ENCODE measurements at regions of chr15 and their contacts with region 1.

Region 1: GRCh38 chr15:67945951-67946700 is 106.3 kb upstream of the RNU6-1 start:
- DNase-seq: peak; percentile 92 to 97
- H3K4me3 ChIP-seq: 0 out of 2 replicates have a peak overlapping the region, but pooled peaks have one; percentile 0
- H3K4me3 Mint-ChIP-seq: peak overlapping the region; percentile 83
- H3K27ac Mint-ChIP-seq: peak overlapping the region; percentile 99
- H3K4me1 ChIP-seq: peaks cover 58% of the 10 kb centered on the region
- H3K4me1 Mint-ChIP-seq: peaks cover 37% of the 10 kb centered on the region
- H3K27me3 ChIP-seq: no peaks in the 10 kb centered on the region
- H3K27me3 Mint-ChIP-seq: no peaks in the 10 kb centered on the region
- CTCF ChIP-seq: no peak

Region 2: DNA sequence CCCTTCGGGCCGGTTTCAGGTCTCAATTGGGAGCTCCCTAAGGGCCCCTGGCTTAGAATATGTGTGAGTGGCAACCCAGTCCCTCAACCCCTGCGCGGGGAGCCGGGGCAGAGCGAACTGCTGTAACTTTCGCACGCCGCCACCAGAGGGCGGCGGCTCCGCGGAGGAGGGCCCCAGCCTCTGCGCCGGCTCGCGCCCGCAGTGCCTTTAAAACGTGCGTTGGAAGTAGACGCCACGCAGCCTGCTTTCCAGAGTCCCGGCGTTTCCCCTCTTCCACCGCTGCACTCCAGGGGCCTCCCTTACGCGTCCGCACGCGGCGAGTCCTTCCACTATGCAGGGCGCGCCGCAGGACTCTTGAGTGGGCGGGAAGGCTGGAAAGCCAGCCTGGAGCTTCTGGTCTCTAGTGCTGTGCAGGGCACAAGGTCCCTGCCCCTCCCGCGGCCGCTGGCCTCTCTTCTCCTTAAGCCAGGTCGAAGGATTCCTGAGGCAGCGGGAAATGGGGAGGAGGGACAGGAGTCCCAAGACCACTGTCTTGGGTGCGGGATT is 82.6 kb before region 1 on chr15:
- CTCF ChIA-PET with region 1: interaction called, 6 read pairs
- POLR2A ChIA-PET with region 1: no interaction called
- intact Hi-C with region 1: loop called (anchors 5 kb)
- DNase-seq: peak; percentile 82 to 86
- H3K4me3 ChIP-seq: peak overlapping the region; percentile 45
- H3K4me3 Mint-ChIP-seq: peak overlapping the region; percentile 70
- H3K27ac Mint-ChIP-seq: peak overlapping the region; percentile 80
- H3K4me1 ChIP-seq: peaks cover 9% of the 10 kb centered on the region; the same call in 1 of the 2 replicates
- H3K4me1 Mint-ChIP-seq: peaks cover 15% of the 10 kb centered on the region
- H3K27me3 ChIP-seq: no peaks in the 10 kb centered on the region
- H3K27me3 Mint-ChIP-seq: no peaks in the 10 kb centered on the region
- CTCF ChIP-seq: peak; percentile 89 to 91

Region 3: GRCh38 chr15:67914537-67915460 is 31.3 kb before region 1 on chr15:
- CTCF ChIA-PET with region 1: interaction called, 6 read pairs
- POLR2A ChIA-PET with region 1: interaction called, 24 read pairs
- intact Hi-C with region 1: loop called (anchors 1 kb)
- DNase-seq: peak; percentile 74
- H3K4me3 ChIP-seq: peak overlapping the region; percentile 14
- H3K4me3 Mint-ChIP-seq: peak overlapping the region; percentile 64
- H3K27ac Mint-ChIP-seq: peak overlapping the region; percentile 72
- H3K4me1 ChIP-seq: peaks cover 55% of the 10 kb centered on the region
- H3K4me1 Mint-ChIP-seq: peaks cover 37% of the 10 kb centered on the region
- H3K27me3 ChIP-seq: no peaks in the 10 kb centered on the region
- H3K27me3 Mint-ChIP-seq: no peaks in the 10 kb centered on the region
- CTCF ChIP-seq: no peak

Region 4: GRCh38 chr15:68017191-68017590 is 71.1 kb after region 1 on chr15:
- CTCF ChIA-PET with region 1: interaction called, 3 read pairs
- POLR2A ChIA-PET with region 1: no interaction called
- intact Hi-C with region 1: loop called (anchors 1 kb)
- DNase-seq: peak; percentile 67 to 85
- H3K4me3 ChIP-seq: no peak overlapping the region
- H3K4me3 Mint-ChIP-seq: peak overlapping the region; percentile 55
- H3K27ac Mint-ChIP-seq: peak overlapping the region; percentile 99
- H3K4me1 ChIP-seq: peaks cover 38% of the 10 kb centered on the region
- H3K4me1 Mint-ChIP-seq: peaks cover 53% of the 10 kb centered on the region
- H3K27me3 ChIP-seq: no peaks in the 10 kb centered on the region
- H3K27me3 Mint-ChIP-seq: no peaks in the 10 kb centered on the region
- CTCF ChIP-seq: no peak

Region 5: GRCh38 chr15:68053701-68054627 is 107.8 kb after region 1 on chr15 and contains the start of gene PIAS1:
- CTCF ChIA-PET with region 1: interaction called, 3 read pairs
- POLR2A ChIA-PET with region 1: interaction called, 12 read pairs
- intact Hi-C with region 1: loop called (anchors 1 kb)
- DNase-seq: peak; percentile 97
- H3K4me3 ChIP-seq: peak within 1 kb of the TSS; percentile 89
- H3K4me3 Mint-ChIP-seq: peak within 1 kb of the TSS; percentile 84
- H3K27ac Mint-ChIP-seq: peak within 1 kb of the TSS; percentile 60
- H3K4me1 ChIP-seq: peaks cover 39% of the 10 kb centered on the region
- H3K4me1 Mint-ChIP-seq: peaks cover 31% of the 10 kb centered on the region
- H3K27me3 ChIP-seq: no peaks in the 10 kb centered on the region
- H3K27me3 Mint-ChIP-seq: no peaks in the 10 kb centered on the region
- CTCF ChIP-seq: peak in 1 of 2 experiments; percentile 12
- total RNA-seq, gene PIAS1: 43.1 and 48.0 TPM in 2 replicates